Activated B cell treated with CpG ODN at 0.5 μM for 24 hours (primary cell): ENCODE measurements at regions of chr18 and their contacts with region 1.

Region 1: GRCh38 chr18:56627991-56628390 is 10.4 kb downstream of the TXNL1 start:
- DNase-seq: no peak
- ATAC-seq: no peak
- H3K4me3 Mint-ChIP-seq: no peak overlapping the region
- H3K27ac Mint-ChIP-seq: no peak overlapping the region
- H3K4me1 Mint-ChIP-seq: peaks cover 15% of the 10 kb centered on the region
- H3K27me3 Mint-ChIP-seq: no peaks in the 10 kb centered on the region
- CTCF ChIP-seq: no peak

Region 2: DNA sequence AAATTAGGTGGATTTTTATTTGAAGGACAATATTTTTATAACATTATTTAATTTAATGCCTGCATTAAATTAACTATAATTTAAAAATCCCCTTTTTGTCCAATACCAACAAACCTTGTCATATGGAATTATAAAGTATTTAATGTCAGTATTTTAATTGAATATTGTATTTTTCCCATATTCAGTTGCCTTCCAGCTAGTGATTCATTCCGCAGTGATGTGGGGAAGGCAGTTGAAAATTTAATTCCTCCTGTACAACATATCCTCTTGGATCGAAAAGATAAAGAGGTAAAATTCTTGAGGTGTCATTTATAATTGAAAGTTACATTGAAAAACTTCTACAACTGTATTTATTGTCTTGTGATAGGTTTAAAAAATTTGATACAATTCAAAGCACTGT is 63.5 kb after region 1 on chr18:
- CTCF ChIA-PET with region 1: no interaction called
- POLR2A ChIA-PET with region 1: interaction called, 12 read pairs
- intact Hi-C with region 1: no loop called
- DNase-seq: no peak
- ATAC-seq: no peak
- H3K4me3 Mint-ChIP-seq: no peak overlapping the region
- H3K27ac Mint-ChIP-seq: no peak overlapping the region
- H3K4me1 Mint-ChIP-seq: no peaks in the 10 kb centered on the region
- H3K27me3 Mint-ChIP-seq: no peaks in the 10 kb centered on the region
- CTCF ChIP-seq: no peak